Endothelial cell of umbilical vein (primary cell): ENCODE measurements at regions of chr20 and their contacts with region 1.

Region 1: DNA sequence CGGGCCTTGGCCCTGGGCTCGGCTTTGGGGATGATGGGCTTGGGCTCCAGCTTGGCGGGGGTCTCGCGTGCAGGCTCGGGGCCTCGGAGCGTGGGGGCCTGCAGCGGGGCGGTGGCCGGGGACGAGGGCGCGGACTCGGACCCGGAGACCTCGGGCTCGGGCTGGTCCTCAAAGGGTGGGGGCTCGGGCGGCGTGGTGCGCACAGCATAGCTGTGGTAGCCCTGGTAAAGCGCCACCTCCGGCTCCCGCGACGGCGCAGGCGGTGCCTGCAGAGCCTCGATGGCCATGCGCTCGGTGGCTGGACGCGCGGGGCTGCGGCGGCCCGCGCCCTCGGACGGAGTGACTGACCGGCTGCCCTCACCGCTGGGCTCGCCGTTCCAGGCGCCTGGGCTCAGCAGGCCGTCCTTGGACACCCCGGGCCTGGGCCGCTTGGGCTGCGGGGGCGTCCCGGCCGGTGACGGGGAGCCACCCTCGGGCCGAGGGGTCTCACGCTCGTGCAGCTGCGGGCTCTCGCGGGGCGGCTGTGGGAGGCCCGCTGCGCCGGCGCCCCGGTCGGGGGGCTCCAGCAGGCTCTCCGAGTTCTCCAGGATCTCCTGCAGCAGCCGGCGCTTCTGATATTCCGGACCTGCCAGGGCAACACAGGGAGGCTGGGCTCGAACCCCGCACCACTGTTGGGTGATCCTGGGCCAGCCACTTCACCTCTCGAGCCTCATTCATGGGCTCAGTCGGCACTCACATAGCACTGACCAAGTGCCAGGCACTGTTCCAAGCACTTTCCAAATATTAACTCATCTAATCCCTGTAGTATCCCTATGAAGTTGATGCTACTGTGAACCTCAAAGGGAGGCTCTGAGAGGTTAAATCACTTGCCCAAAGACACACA is 71.0 kb downstream of the JPH2 start:
- DNase-seq: no peak
- H3K4me3 ChIP-seq: no peak overlapping the region
- H3K27ac ChIP-seq: no peak overlapping the region
- H3K4me1 ChIP-seq: no peaks in the 10 kb centered on the region
- H3K27me3 ChIP-seq: peaks cover 6 to 11% of the 10 kb centered on the region in 2 experiments
- CTCF ChIP-seq: no peak
- POLR2A ChIP-seq: no peak

Region 2: GRCh38 chr20:44135012-44135412 is 19.0 kb after region 1 on chr20:
- CTCF ChIA-PET with region 1: interaction called, 20 read pairs
- POLR2A ChIA-PET with region 1: no interaction called
- dilution Hi-C with region 1: no loop called
- intact Hi-C with region 1: no loop called
- DNase-seq: no peak
- H3K4me3 ChIP-seq: no peak overlapping the region
- H3K27ac ChIP-seq: no peak overlapping the region
- H3K4me1 ChIP-seq: no peaks in the 10 kb centered on the region
- H3K27me3 ChIP-seq: peaks cover 5% of the 10 kb centered on the region in 2 experiments
- CTCF ChIP-seq: no peak
- POLR2A ChIP-seq: no peak

Region 3: DNA sequence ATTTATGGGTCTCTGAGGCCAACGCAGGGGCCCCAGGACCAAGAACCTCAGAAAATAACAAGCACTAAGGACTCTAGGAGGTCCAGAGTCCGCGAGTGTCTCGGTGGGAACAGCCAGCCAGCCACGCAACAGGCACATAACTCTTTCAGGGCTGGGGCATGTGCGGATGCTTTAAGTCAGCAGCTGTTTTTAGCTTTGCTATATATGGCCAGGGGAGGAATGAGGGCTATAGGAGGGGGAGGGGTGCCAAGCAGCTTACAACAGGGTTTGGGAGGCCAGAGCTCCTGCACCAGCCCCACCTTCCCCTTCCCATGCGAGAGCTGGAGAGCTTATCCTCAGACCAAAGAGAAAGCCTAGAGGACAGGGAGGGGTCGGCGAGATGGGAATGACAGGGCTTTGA is 64.8 kb after region 1 on chr20:
- CTCF ChIA-PET with region 1: interaction called, 21 read pairs
- POLR2A ChIA-PET with region 1: no interaction called
- dilution Hi-C with region 1: no loop called
- intact Hi-C with region 1: no loop called
- DNase-seq: no peak
- H3K4me3 ChIP-seq: no peak overlapping the region
- H3K27ac ChIP-seq: no peak overlapping the region
- H3K4me1 ChIP-seq: no peaks in the 10 kb centered on the region
- H3K27me3 ChIP-seq: peaks cover 6 to 27% of the 10 kb centered on the region in 2 experiments
- CTCF ChIP-seq: no peak
- POLR2A ChIP-seq: no peak

Region 4: GRCh38 chr20:44187051-44187762 is 71.2 kb after region 1 on chr20 and contains the start of gene JPH2:
- CTCF ChIA-PET with region 1: interaction called, 423 read pairs
- POLR2A ChIA-PET with region 1: interaction called, 4 read pairs
- dilution Hi-C with region 1: no loop called
- intact Hi-C with region 1: loop called (anchors 1 kb)
- DNase-seq: no peak
- H3K4me3 ChIP-seq: no peak within 1 kb of the TSS
- H3K27ac ChIP-seq: no peak within 1 kb of the TSS
- H3K4me1 ChIP-seq: peaks cover 3% of the 10 kb centered on the region
- H3K27me3 ChIP-seq: peaks cover 14 to 18% of the 10 kb centered on the region in 2 experiments
- CTCF ChIP-seq: no peak
- POLR2A ChIP-seq: no peak
- total RNA-seq, gene JPH2: not detected in 2 replicates

Region 5: DNA sequence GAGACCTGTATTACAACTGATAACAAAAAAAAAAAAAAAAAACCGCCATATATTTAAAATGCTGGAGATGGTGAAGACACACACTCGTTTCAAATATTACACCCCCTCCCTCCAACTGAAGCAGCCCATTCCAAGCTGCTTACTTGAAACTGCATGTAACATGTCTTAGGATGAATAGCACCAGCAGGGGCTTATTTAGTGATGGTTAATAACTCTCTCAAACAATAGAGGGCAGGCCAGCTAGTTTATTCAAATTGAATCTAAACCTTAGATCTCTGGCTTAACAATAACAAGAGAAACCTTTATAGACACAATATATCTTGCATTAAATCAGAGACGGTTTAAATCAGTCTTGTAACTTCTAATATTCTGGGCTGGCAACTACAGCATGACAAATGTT is 80.3 kb after region 1 on chr20:
- CTCF ChIA-PET with region 1: interaction called, 423 read pairs
- POLR2A ChIA-PET with region 1: no interaction called
- dilution Hi-C with region 1: no loop called
- intact Hi-C with region 1: no loop called
- DNase-seq: no peak
- H3K4me3 ChIP-seq: no peak overlapping the region
- H3K27ac ChIP-seq: no peak overlapping the region
- H3K4me1 ChIP-seq: no peaks in the 10 kb centered on the region
- H3K27me3 ChIP-seq: peaks cover 0 to 2% of the 10 kb centered on the region in 2 experiments
- CTCF ChIP-seq: no peak
- POLR2A ChIP-seq: no peak

Region 6: DNA sequence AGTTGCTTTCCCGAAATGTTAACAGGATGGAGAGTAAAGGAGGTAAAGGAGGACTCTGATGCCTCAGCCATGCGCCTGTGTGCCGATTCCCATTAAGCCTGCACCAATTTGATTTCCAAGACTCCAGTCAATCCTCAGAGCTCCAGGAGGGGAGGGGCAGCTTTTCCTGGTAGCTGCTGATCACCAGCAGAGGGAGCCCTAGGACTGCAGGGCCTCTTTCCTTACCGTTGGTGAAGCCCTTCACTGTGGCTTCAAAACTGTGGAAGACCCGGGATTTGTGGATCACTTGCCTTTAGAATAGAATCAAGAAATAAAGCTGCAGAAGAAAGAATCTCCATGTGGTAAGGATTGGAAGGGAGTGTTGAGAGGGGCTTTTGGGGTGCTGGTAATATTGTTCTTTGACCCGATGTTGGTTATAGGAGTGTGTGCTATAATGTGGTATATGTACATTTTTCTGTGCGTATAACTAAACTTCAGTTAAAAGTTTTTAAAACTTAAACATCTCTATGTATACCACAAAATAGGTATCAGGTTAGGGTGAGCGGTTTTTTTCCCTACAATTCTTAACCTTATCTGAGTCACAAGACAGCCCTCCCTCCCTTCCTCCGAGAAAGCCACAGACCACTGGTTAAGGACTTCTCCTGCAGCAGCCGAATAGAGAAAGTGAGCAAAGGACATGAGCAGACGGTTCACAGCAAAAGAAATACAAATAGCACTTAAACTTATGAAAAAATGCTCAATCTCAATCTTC is 101.5 kb after region 1 on chr20:
- CTCF ChIA-PET with region 1: interaction called, 19 read pairs
- POLR2A ChIA-PET with region 1: no interaction called
- dilution Hi-C with region 1: no loop called
- intact Hi-C with region 1: no loop called
- DNase-seq: peak; percentile 55
- H3K4me3 ChIP-seq: no peak overlapping the region
- H3K27ac ChIP-seq: no peak overlapping the region
- H3K4me1 ChIP-seq: no peaks in the 10 kb centered on the region
- H3K27me3 ChIP-seq: no peaks in the 10 kb centered on the region
- CTCF ChIP-seq: peak; percentile 80 to 91
- POLR2A ChIP-seq: no peak

Region 7: DNA sequence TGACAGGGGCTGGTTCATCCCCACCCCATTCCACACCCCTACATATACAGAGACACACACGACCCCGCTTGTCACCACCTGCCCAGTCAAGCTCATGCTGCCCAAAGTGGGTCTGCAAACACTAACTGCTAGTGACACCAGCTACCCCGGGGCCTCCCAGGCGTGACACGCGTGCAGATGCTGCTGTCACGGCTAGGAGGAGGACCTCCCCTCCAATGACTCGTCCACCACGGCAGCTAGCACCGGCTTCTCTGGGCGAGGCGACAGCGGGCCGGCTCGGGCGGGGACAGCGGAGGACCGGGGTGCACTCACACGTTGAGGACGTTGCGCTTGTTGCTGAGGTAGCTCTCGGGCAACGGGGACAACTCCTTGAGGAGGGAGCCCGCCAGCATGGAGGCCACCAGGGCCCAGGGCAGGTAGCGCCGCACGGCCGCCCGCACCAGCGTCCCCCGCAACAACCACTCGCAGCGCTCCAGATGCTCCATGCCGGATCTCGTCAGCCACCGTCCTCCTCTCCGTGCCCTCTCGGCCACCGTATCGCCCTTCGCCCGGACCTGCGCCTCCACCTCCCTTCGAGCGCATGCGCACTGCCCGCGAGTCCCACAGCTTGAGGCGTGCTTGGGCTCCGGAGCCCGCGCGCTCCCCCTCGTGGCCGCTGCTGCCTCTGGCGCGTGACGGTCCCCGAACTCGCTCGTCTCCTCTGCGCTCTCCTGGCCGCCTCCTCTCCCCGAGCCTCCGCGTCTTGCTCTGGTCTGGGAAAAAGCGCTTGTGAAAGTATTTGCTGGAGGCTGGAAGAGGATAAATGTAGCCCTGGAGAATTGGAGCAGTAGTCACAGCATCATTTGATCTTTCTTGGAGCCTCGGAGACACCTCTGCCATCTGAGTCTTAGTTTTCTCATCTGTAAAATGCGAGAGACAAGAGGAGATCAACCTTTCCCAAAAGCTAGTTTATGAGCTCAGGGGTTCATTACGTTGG is 194.9 kb after region 1 on chr20 and contains the start of gene FITM2:
- CTCF ChIA-PET with region 1: interaction called, 63 read pairs
- POLR2A ChIA-PET with region 1: no interaction called
- dilution Hi-C with region 1: no loop called
- intact Hi-C with region 1: loop called (anchors 1 kb)
- DNase-seq: peak; percentile 96
- H3K4me3 ChIP-seq: peak within 1 kb of the TSS; percentile 37 to 71 (median 65)
- H3K27ac ChIP-seq: no peak within 1 kb of the TSS
- H3K4me1 ChIP-seq: peaks cover 8% of the 10 kb centered on the region
- H3K27me3 ChIP-seq: no peaks in the 10 kb centered on the region
- CTCF ChIP-seq: peak; percentile 99
- POLR2A ChIP-seq: peak; percentile 72
- total RNA-seq, gene FITM2: 6.8 and 7.7 TPM in 2 replicates